ENCODE measurements at regions of chr1 and their contacts with region 1.

Region 1: GRCh38 chr1:166594646-166595045 is 244.6 kb upstream of the POGK start:
- DNase-seq: no peak
- ATAC-seq: no peak
- H3K4me3 Mint-ChIP-seq: no peak overlapping the region
- H3K27ac Mint-ChIP-seq: no peak overlapping the region
- H3K4me1 Mint-ChIP-seq: no peaks in the 10 kb centered on the region
- H3K27me3 Mint-ChIP-seq: peaks cover 11% of the 10 kb centered on the region

Region 2: GRCh38 chr1:165179306-165179705 is 1415.3 kb before region 1 on chr1:
- CTCF ChIA-PET with region 1: no interaction called
- POLR2A ChIA-PET with region 1: no interaction called
- intact Hi-C with region 1: loop called in 1 of 2 experiments (anchors 5 kb)
- DNase-seq: no peak
- ATAC-seq: no peak
- H3K4me3 Mint-ChIP-seq: no peak overlapping the region
- H3K27ac Mint-ChIP-seq: no peak overlapping the region
- H3K4me1 Mint-ChIP-seq: no peaks in the 10 kb centered on the region
- H3K27me3 Mint-ChIP-seq: peaks cover 5% of the 10 kb centered on the region

Region 3: DNA sequence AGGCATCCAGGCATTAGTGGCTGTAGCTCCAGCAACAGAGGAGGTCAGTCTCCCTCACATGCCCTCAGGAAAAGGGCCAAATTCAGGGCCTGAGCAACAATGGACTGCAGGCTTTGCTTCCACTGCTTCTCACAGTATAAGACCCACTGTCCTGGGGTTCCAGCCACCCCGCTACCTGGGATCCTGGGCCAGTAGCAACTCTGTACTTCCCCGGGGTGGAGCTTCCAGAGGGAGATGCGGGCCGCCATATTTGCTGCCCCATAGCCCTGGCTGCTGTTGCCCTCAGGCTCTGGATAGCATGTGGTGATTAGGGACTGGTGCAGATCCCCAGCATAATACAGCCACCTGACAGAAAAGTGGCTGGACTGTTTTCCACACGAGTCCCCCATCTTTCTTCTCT is 43.5 kb after region 1 on chr1:
- CTCF ChIA-PET with region 1: no interaction called
- POLR2A ChIA-PET with region 1: no interaction called
- intact Hi-C with region 1: no loop called
- DNase-seq: no peak
- ATAC-seq: no peak
- H3K4me3 Mint-ChIP-seq: no peak overlapping the region
- H3K27ac Mint-ChIP-seq: no peak overlapping the region
- H3K4me1 Mint-ChIP-seq: no peaks in the 10 kb centered on the region
- H3K27me3 Mint-ChIP-seq: peaks cover 24% of the 10 kb centered on the region